ENCODE measurements at regions of chr6 and their contacts with region 1.

Region 1: GRCh38 chr6:157946865-157947532 is 34.7 kb upstream of the SYNJ2 start:
- DNase-seq: no peak
- H3K4me3 Mint-ChIP-seq: no peak overlapping the region
- H3K27ac Mint-ChIP-seq: peak overlapping the region; percentile 24
- H3K4me1 Mint-ChIP-seq: peaks cover 32% of the 10 kb centered on the region
- H3K27me3 Mint-ChIP-seq: peaks cover 9% of the 10 kb centered on the region

Region 2: DNA sequence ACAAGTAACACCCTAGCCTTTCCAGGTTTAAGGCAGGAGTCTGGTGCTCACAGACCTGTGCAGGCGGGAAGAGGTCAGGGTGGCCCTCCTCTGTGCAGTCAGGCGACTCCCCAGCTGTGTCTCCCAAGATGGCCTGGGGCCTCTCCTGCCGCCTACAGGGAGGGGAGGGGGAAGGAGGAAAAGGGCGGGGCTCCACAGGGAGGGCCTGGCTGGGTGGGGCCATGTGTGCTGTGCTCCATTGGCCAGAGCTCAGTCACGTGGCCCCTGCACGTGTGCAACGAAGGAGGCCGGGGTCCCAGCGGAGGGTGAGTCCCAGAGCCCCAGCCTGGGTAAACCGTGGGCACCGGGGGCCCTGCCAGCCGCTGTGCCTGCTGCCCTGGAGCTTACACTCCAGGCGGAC is 354.5 kb before region 1 on chr6:
- intact Hi-C with region 1: no loop called
- DNase-seq: no peak
- H3K4me3 Mint-ChIP-seq: no peak overlapping the region
- H3K27ac Mint-ChIP-seq: no peak overlapping the region
- H3K4me1 Mint-ChIP-seq: peaks cover 11% of the 10 kb centered on the region
- H3K27me3 Mint-ChIP-seq: no peaks in the 10 kb centered on the region

Region 3: GRCh38 chr6:157667211-157668008 is 279.6 kb before region 1 on chr6:
- intact Hi-C with region 1: loop called (anchors 2 kb)
- DNase-seq: peak; percentile 30
- H3K4me3 Mint-ChIP-seq: no peak overlapping the region
- H3K27ac Mint-ChIP-seq: peak overlapping the region; percentile 41
- H3K4me1 Mint-ChIP-seq: peaks cover 12% of the 10 kb centered on the region
- H3K27me3 Mint-ChIP-seq: peaks cover 10% of the 10 kb centered on the region

Region 4: DNA sequence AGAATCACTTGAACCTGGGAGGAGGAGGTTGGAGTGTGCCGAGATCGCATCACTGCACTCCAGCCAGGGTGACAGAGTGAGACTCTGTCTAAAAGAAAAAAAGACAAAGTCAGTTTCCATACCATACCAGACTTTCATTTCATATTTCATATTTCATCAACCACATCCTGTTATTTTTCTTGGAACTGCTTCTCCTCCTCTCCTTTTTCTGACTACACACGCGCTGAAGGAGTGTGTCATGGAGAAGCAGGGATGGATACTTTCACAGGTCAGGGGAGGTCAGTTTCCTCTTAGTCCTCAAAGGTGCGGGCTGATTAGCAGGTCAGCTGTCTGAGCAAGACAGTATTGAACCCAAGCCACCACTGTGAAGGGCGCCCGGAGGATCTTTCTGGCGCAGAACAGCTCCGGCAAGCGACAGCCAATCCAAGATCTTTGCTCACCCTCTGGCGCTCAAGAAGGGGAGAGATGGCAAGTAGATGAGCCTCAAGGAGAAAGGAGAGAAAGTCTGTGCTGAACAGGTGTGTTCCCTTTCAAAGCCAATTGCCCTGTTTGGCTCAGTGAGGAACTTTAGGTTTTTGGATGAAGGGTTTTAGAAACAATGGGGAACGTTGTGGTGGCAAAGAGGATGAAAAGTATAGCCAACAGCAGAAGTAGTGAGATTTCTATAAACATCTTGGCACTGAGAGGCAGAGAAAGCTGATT is 15.8 kb after region 1 on chr6:
- intact Hi-C with region 1: loop called (anchors 2 kb)
- DNase-seq: no peak
- H3K4me3 Mint-ChIP-seq: peak overlapping the region; percentile 69
- H3K27ac Mint-ChIP-seq: peak overlapping the region; percentile 86
- H3K4me1 Mint-ChIP-seq: peaks cover 28% of the 10 kb centered on the region
- H3K27me3 Mint-ChIP-seq: peaks cover 1% of the 10 kb centered on the region

Region 5: DNA sequence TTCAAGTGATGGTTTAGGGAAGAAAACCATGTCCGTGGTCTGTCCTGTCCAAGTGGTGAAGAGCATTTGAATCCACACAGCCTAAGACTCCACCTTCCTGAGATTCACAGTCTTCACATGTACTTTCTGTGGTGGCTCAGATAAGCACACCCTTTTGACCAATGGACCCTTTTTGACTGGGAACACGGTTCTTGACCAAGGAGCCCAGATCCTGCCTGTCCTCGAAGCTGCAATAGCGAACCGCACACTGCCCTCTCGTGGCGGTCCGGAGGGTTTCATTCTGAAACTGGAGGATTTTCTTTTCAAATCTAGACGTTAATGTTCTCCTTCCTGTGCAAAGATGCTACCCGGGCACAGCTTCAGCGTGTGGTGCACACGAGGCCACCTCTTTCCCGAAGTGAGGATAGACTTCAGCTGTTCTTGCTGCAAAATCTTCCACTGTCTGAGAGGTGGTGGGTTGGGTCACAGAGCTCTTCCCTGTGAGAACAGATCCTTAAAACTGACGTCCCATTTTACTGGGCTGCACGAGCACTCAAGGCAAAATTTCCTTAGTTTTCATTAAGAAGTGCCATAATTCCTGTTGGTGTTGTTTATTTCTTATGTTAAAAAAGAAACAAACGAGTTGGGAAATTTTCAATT is 125.2 kb after region 1 on chr6:
- intact Hi-C with region 1: loop called (anchors 1 kb)
- DNase-seq: peak; percentile 60
- H3K4me3 Mint-ChIP-seq: no peak overlapping the region
- H3K27ac Mint-ChIP-seq: peak overlapping the region; percentile 70
- H3K4me1 Mint-ChIP-seq: peaks cover 55% of the 10 kb centered on the region
- H3K27me3 Mint-ChIP-seq: no peaks in the 10 kb centered on the region

Measured in activated T-helper 1 cell treated with anti-CD3 and anti-CD28 coated beads, Interleukin-12 subunit alpha, Interleukin-12 subunit beta, Interleukin-2, Interleukin-4 antibody, amounts not matched to agents 30 ng/mL and 10 ng/mL and 1 ng/mL, durations not matched to agents 14 hours and 24 hours and 36 hours (primary cell).